ENCODE measurements at regions of chr3 and their contacts with region 1.

Region 1: GRCh38 chr3:66449411-66449974 is 51.3 kb downstream of the LRIG1 start:
- DNase-seq: no peak
- ATAC-seq: peak; percentile 69

Region 2: GRCh38 chr3:66211779-66212178 is 237.7 kb before region 1 on chr3:
- intact Hi-C with region 1: no loop called
- DNase-seq: no peak
- ATAC-seq: no peak

Region 3: GRCh38 chr3:66322436-66322835 is 127.1 kb before region 1 on chr3:
- intact Hi-C with region 1: no loop called
- DNase-seq: no peak
- ATAC-seq: no peak

Region 4: DNA sequence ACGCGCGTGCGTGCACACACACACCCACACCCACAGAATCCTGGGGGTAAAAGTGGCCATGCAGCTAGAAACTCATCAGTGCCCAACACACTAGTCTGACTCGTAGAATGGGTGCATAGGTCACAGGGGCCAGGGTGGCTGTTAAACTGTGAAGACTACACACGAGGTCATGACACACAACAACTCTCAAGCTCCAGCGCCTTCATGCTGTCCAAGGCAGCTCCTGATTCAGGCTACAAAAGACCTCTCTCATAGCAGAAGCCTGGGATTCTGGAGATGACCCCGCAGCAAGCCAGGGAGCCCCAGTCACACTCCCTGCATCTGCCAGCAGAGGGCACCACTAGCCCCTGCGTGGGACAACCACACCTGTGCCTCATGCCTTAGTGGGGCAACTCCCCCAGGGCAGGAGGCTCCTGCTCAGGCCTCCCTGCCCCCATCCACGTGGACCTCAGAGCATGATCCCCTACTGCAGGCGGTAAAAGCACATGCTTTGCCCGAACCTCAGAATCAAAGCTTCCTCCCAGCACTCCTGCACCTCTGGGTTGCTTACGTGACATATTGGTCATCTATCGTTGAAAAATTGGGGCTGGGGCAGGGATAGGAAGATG is 41.8 kb before region 1 on chr3:
- intact Hi-C with region 1: no loop called
- DNase-seq: peak; percentile 86
- ATAC-seq: peak; percentile 70

Region 5: DNA sequence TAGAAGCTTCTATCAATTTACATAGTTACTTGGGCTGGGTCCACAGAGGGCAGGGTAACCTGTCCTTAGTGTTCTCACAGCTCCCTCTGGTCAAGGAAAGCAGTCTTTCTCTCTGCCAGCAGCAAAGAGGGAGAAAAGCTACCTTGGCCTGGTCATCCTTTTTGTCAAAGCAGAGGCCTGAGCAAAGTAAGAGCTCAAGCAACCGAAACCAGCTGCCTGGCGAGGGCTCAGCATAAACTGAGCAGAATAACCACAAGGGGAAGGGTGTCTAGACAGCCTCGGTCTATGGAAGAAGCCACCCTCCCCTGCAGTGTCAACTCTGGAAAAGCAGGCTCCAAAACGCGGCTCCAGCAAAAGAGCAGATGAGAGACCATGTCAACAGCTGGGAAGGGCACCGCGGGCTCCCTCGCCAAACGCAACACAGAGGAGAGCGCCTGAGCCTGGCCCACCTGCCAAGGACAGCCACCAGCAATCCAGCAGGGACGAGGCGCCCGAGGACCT is 34.0 kb after region 1 on chr3:
- intact Hi-C with region 1: loop called (anchors 5 kb)
- DNase-seq: peak; percentile 70
- ATAC-seq: peak; percentile 72

Region 6: GRCh38 chr3:66889750-66890494 is 440.4 kb after region 1 on chr3:
- intact Hi-C with region 1: no loop called
- DNase-seq: no peak
- ATAC-seq: no peak

Measured in Right ventricle myocardium superior (tissue), 1 donor.